ENCODE measurements at regions of chr3 and their contacts with region 1.

Region 1: DNA sequence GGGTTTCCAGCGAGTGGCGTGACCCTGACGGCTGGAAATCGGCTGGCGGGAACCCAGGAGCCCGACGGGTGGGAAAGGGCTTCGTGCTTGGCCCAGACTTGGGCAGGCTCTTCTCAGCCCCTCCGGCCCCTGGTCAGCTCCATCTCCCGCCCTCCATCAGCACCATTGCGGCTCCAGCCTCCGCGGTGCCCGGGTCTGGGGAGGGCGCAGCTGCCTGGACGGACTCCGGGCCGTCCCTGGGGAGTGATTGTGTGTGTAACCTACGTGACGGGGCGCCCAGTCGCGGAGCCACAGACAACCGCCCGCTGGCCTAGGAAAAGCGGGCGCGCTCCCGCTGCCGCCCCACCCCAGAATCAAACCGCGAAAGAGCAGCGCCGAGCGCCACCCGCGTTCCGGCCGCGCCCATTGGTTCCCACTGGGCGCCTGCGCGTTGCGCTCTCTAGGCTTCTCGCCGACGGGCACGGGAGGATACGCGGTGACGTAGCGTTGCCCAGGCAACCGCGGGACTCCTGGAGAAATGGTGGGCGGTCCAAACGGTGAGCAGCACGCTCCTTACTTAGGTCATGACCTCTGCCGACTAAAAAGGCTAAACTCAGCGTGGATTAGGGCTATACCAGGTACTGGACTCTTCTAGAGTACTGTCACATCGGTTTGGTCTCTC is at the start of gene CFAP20DC:
- DNase-seq: peak; percentile 84
- H3K4me3 ChIP-seq: peak within 1 kb of the TSS; percentile 42
- H3K27ac ChIP-seq: no peak within 1 kb of the TSS
- H3K4me1 ChIP-seq: no peaks in the 10 kb centered on the region
- H3K27me3 ChIP-seq: no peaks in the 10 kb centered on the region
- CTCF ChIP-seq: no peak
- total RNA-seq, gene CFAP20DC: 0.74 and 1.3 TPM in 2 replicates

Region 2: GRCh38 chr3:58502872-58503271 is 546.9 kb before region 1 on chr3:
- CTCF ChIA-PET with region 1: no interaction called
- POLR2A ChIA-PET with region 1: no interaction called
- intact Hi-C with region 1: no loop called
- DNase-seq: no peak
- H3K4me3 ChIP-seq: no peak overlapping the region
- H3K27ac ChIP-seq: no peak overlapping the region
- H3K4me1 ChIP-seq: no peaks in the 10 kb centered on the region
- H3K27me3 ChIP-seq: no peaks in the 10 kb centered on the region
- CTCF ChIP-seq: no peak

Region 3: GRCh38 chr3:58640700-58641372 is 409.0 kb before region 1 on chr3:
- CTCF ChIA-PET with region 1: no interaction called
- POLR2A ChIA-PET with region 1: no interaction called
- intact Hi-C with region 1: loop called (anchors 5 kb)
- DNase-seq: peak; percentile 61
- H3K4me3 ChIP-seq: no peak overlapping the region
- H3K27ac ChIP-seq: no peak overlapping the region
- H3K4me1 ChIP-seq: no peaks in the 10 kb centered on the region
- H3K27me3 ChIP-seq: no peaks in the 10 kb centered on the region
- CTCF ChIP-seq: peak; percentile 73

Region 4: GRCh38 chr3:58824285-58824684 is 225.5 kb before region 1 on chr3:
- CTCF ChIA-PET with region 1: interaction called, 3 read pairs
- POLR2A ChIA-PET with region 1: no interaction called
- intact Hi-C with region 1: loop called (anchors 5 kb)
- DNase-seq: peak; percentile 47
- H3K4me3 ChIP-seq: no peak overlapping the region
- H3K27ac ChIP-seq: no peak overlapping the region
- H3K4me1 ChIP-seq: no peaks in the 10 kb centered on the region
- H3K27me3 ChIP-seq: no peaks in the 10 kb centered on the region
- CTCF ChIP-seq: peak; percentile 66

Region 5: GRCh38 chr3:59857589-59858346 is 808.0 kb after region 1 on chr3:
- CTCF ChIA-PET with region 1: interaction called, 11 read pairs
- POLR2A ChIA-PET with region 1: no interaction called
- intact Hi-C with region 1: no loop called
- DNase-seq: peak; percentile 57
- H3K4me3 ChIP-seq: no peak overlapping the region
- H3K27ac ChIP-seq: no peak overlapping the region
- H3K4me1 ChIP-seq: no peaks in the 10 kb centered on the region
- H3K27me3 ChIP-seq: no peaks in the 10 kb centered on the region
- CTCF ChIP-seq: peak; percentile 76